CD8-positive, alpha-beta T cell (primary cell): ENCODE measurements at regions of chr15 and their contacts with region 1.

Region 1: GRCh38 chr15:79853458-79854328 is 43.1 kb downstream of the MTHFS start:
- DNase-seq: peak; percentile 21 to 77 (median 59)
- ATAC-seq: peak; percentile 99
- H3K4me3 ChIP-seq: no peak overlapping the region
- H3K4me3 Mint-ChIP-seq: no peak overlapping the region
- H3K27ac ChIP-seq: no peak overlapping the region
- H3K27ac Mint-ChIP-seq: peak overlapping the region; percentile 42
- H3K4me1 ChIP-seq: no peaks in the 10 kb centered on the region
- H3K4me1 Mint-ChIP-seq: peaks cover 14% of the 10 kb centered on the region
- H3K27me3 ChIP-seq: no peaks in the 10 kb centered on the region
- H3K27me3 Mint-ChIP-seq: no peaks in the 10 kb centered on the region
- CTCF ChIP-seq: peak; percentile 93

Region 2: GRCh38 chr15:79863886-79864285 is 10.2 kb after region 1 on chr15:
- CTCF ChIA-PET with region 1: interaction called, 13 read pairs
- POLR2A ChIA-PET with region 1: no interaction called
- intact Hi-C with region 1: no loop called
- DNase-seq: no peak
- ATAC-seq: no peak
- H3K4me3 ChIP-seq: no peak overlapping the region
- H3K4me3 Mint-ChIP-seq: no peak overlapping the region
- H3K27ac ChIP-seq: no peak overlapping the region
- H3K27ac Mint-ChIP-seq: no peak overlapping the region
- H3K4me1 ChIP-seq: no peaks in the 10 kb centered on the region
- H3K4me1 Mint-ChIP-seq: peaks cover 25% of the 10 kb centered on the region
- H3K27me3 ChIP-seq: no peaks in the 10 kb centered on the region
- H3K27me3 Mint-ChIP-seq: no peaks in the 10 kb centered on the region
- CTCF ChIP-seq: no peak

Region 3: GRCh38 chr15:79872358-79873017 is 18.8 kb after region 1 on chr15:
- CTCF ChIA-PET with region 1: interaction called, 12 read pairs
- POLR2A ChIA-PET with region 1: no interaction called
- intact Hi-C with region 1: no loop called
- DNase-seq: peak in 7 of 9 experiments; percentile 10 to 75 (median 32)
- ATAC-seq: peak; percentile 84
- H3K4me3 ChIP-seq: no peak overlapping the region
- H3K4me3 Mint-ChIP-seq: no peak overlapping the region
- H3K27ac ChIP-seq: no peak overlapping the region
- H3K27ac Mint-ChIP-seq: peak overlapping the region; percentile 78
- H3K4me1 ChIP-seq: peaks cover 11% of the 10 kb centered on the region
- H3K4me1 Mint-ChIP-seq: peaks cover 32% of the 10 kb centered on the region
- H3K27me3 ChIP-seq: no peaks in the 10 kb centered on the region
- H3K27me3 Mint-ChIP-seq: no peaks in the 10 kb centered on the region
- CTCF ChIP-seq: no peak

Region 4: GRCh38 chr15:80072285-80072994 is 218.7 kb after region 1 on chr15:
- CTCF ChIA-PET with region 1: no interaction called
- POLR2A ChIA-PET with region 1: no interaction called
- intact Hi-C with region 1: no loop called
- DNase-seq: peak in 3 of 9 experiments; percentile 29 to 75 (median 58)
- ATAC-seq: peak; percentile 98
- H3K4me3 ChIP-seq: peak overlapping the region; percentile 25 to 32
- H3K4me3 Mint-ChIP-seq: peak overlapping the region; percentile 83
- H3K27ac ChIP-seq: peak overlapping the region in 1 of 2 experiments; percentile 41
- H3K27ac Mint-ChIP-seq: peak overlapping the region; percentile 71
- H3K4me1 ChIP-seq: peaks cover 31% of the 10 kb centered on the region
- H3K4me1 Mint-ChIP-seq: peaks cover 81% of the 10 kb centered on the region
- H3K27me3 ChIP-seq: no peaks in the 10 kb centered on the region
- H3K27me3 Mint-ChIP-seq: no peaks in the 10 kb centered on the region
- CTCF ChIP-seq: no peak

Region 5: GRCh38 chr15:80173022-80173759 is 319.5 kb after region 1 on chr15:
- CTCF ChIA-PET with region 1: interaction called, 3 read pairs
- POLR2A ChIA-PET with region 1: no interaction called
- intact Hi-C with region 1: loop called (anchors 2 to 5 kb)
- DNase-seq: peak; percentile 52 to 81 (median 69)
- ATAC-seq: peak; percentile 77
- H3K4me3 ChIP-seq: no peak overlapping the region
- H3K4me3 Mint-ChIP-seq: no peak overlapping the region
- H3K27ac ChIP-seq: no peak overlapping the region
- H3K27ac Mint-ChIP-seq: no peak overlapping the region
- H3K4me1 ChIP-seq: no peaks in the 10 kb centered on the region
- H3K4me1 Mint-ChIP-seq: no peaks in the 10 kb centered on the region
- H3K27me3 ChIP-seq: no peaks in the 10 kb centered on the region
- H3K27me3 Mint-ChIP-seq: no peaks in the 10 kb centered on the region
- CTCF ChIP-seq: peak; percentile 76